WTC11 (cell line): ENCODE measurements at regions of chr13 and their contacts with region 1.

Region 1: GRCh38 chr13:75694722-75695121 is 58.6 kb downstream of the LMO7 start:
- DNase-seq: no peak
- ATAC-seq: no peak
- H3K4me3 Mint-ChIP-seq: no peak overlapping the region
- H3K27ac Mint-ChIP-seq: peak overlapping the region; percentile 0; the same call in 1 of the 2 replicates
- H3K4me1 Mint-ChIP-seq: peaks cover 15% of the 10 kb centered on the region
- H3K27me3 Mint-ChIP-seq: no peaks in the 10 kb centered on the region; the same call in 1 of the 2 replicates
- CTCF ChIP-seq: no peak

Region 2: GRCh38 chr13:75751350-75751749 is 56.6 kb after region 1 on chr13:
- CTCF ChIA-PET with region 1: no interaction called
- POLR2A ChIA-PET with region 1: no interaction called
- DNase-seq: no peak
- ATAC-seq: no peak
- H3K4me3 Mint-ChIP-seq: no peak overlapping the region
- H3K27ac Mint-ChIP-seq: no peak overlapping the region
- H3K4me1 Mint-ChIP-seq: peaks cover 9% of the 10 kb centered on the region
- H3K27me3 Mint-ChIP-seq: no peaks in the 10 kb centered on the region
- CTCF ChIP-seq: no peak

Region 3: DNA sequence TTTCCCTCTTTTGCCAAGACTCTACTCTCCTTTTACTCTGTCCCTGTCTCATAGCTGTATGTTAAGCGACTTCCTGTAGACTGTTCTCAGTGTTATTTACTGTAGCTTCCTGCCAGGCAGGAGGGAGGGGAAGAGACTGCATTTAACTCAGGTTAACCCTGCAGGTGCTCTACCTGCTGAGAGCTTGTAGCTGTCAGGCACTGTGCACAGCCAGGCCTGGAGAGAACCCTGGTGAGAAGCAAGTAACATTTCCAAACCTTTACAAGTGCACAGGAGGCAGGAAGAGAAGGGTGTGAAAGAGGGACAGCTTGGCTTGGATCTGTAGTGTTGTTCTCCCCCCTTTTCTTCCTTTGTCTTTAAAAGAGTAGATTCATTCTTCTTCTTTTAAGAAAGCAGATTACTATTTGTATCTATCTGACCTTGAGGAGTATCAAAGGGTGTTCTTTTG is 108.5 kb after region 1 on chr13:
- CTCF ChIA-PET with region 1: interaction called, 12 read pairs
- POLR2A ChIA-PET with region 1: no interaction called
- DNase-seq: peak; percentile 55
- ATAC-seq: peak; percentile 95
- H3K4me3 Mint-ChIP-seq: peak overlapping the region; percentile 10
- H3K27ac Mint-ChIP-seq: peak overlapping the region; percentile 97
- H3K4me1 Mint-ChIP-seq: peaks cover 92% of the 10 kb centered on the region
- H3K27me3 Mint-ChIP-seq: no peaks in the 10 kb centered on the region
- CTCF ChIP-seq: no peak

Region 4: GRCh38 chr13:75855847-75856246 is 161.1 kb after region 1 on chr13:
- CTCF ChIA-PET with region 1: interaction called, 12 read pairs
- POLR2A ChIA-PET with region 1: no interaction called
- DNase-seq: no peak
- ATAC-seq: no peak
- H3K4me3 Mint-ChIP-seq: no peak overlapping the region
- H3K27ac Mint-ChIP-seq: no peak overlapping the region
- H3K4me1 Mint-ChIP-seq: peaks cover 8% of the 10 kb centered on the region; the same call in 1 of the 2 replicates
- H3K27me3 Mint-ChIP-seq: no peaks in the 10 kb centered on the region
- CTCF ChIP-seq: no peak

Region 5: GRCh38 chr13:75870397-75870903 is 175.7 kb after region 1 on chr13:
- CTCF ChIA-PET with region 1: interaction called, 38 read pairs
- POLR2A ChIA-PET with region 1: no interaction called
- DNase-seq: no peak
- ATAC-seq: no peak; the same call in 1 of the 2 replicates
- H3K4me3 Mint-ChIP-seq: no peak overlapping the region
- H3K27ac Mint-ChIP-seq: peak overlapping the region; percentile 72; the same call in 1 of the 2 replicates
- H3K4me1 Mint-ChIP-seq: peaks cover 48% of the 10 kb centered on the region
- H3K27me3 Mint-ChIP-seq: no peaks in the 10 kb centered on the region
- CTCF ChIP-seq: peak; percentile 68